Caco-2 (cell line): ENCODE measurements at regions of chr1 and their contacts with region 1.

Region 1: DNA sequence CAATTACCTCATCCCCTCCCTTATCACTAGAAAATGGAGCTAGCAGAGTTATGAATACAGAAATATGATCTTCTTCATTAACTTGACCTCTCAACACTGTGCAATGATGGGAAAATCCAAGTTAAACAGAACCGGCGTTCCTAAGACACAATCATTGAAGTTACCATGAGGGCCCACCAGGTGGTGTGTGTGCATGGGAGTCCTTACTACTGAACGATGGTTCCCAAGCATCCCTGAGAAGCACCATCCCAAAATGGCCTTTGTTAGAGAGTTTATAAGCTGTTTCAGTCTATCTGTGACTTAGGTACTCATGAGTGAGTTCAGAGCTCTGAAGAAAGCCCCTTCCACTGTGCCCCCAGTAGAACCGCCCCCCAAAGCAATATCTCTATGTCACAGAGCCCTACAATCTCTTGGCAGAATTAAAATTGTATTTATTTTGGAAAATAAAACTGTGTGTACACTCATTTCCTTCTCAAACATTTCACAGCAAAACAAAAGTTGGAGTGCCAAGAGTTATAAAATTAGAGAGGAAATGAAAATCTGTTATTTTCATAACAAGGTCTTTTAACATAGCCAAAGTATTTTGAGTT is 56.8 kb downstream of the PLD5 start:
- DNase-seq: peak; percentile 51 to 54
- H3K4me3 ChIP-seq: no peak overlapping the region
- H3K4me3 Mint-ChIP-seq: no peak overlapping the region
- H3K27ac Mint-ChIP-seq: no peak overlapping the region
- H3K4me1 ChIP-seq: peaks cover 9% of the 10 kb centered on the region
- H3K4me1 Mint-ChIP-seq: peaks cover 6% of the 10 kb centered on the region
- H3K27me3 ChIP-seq: no peaks in the 10 kb centered on the region
- H3K27me3 Mint-ChIP-seq: no peaks in the 10 kb centered on the region
- CTCF ChIP-seq: peak; percentile 57 to 77

Region 2: GRCh38 chr1:242641461-242641860 is 173.8 kb after region 1 on chr1:
- CTCF ChIA-PET with region 1: interaction called, 3 read pairs
- POLR2A ChIA-PET with region 1: no interaction called
- intact Hi-C with region 1: loop called (anchors 10 kb)
- DNase-seq: no peak
- H3K4me3 ChIP-seq: no peak overlapping the region
- H3K4me3 Mint-ChIP-seq: no peak overlapping the region
- H3K27ac Mint-ChIP-seq: no peak overlapping the region
- H3K4me1 ChIP-seq: no peaks in the 10 kb centered on the region
- H3K4me1 Mint-ChIP-seq: no peaks in the 10 kb centered on the region
- H3K27me3 ChIP-seq: no peaks in the 10 kb centered on the region
- H3K27me3 Mint-ChIP-seq: no peaks in the 10 kb centered on the region
- CTCF ChIP-seq: no peak

Region 3: DNA sequence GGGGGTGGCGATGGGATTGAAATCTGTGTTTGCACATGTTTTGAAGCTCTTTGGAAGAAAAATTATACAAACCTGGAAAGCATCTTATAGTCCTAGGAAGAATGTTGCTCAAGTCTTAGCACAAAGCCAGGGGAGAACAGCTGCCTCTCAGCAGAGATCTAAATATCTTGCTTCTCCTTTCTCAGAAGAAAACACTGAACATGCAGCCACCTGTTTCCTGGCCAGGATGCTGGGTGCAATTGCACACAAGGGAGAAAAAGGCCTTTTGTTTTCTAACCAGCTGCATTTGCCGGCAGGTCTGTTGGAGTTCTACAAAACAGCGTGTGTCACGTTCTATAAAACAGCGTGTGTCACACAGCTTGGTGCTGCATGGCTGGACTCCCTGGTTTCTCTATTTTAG is 316.4 kb after region 1 on chr1:
- CTCF ChIA-PET with region 1: no interaction called
- POLR2A ChIA-PET with region 1: no interaction called
- intact Hi-C with region 1: loop called (anchors 10 kb)
- DNase-seq: no peak
- H3K4me3 ChIP-seq: no peak overlapping the region
- H3K4me3 Mint-ChIP-seq: no peak overlapping the region
- H3K27ac Mint-ChIP-seq: no peak overlapping the region
- H3K4me1 ChIP-seq: peaks cover 4% of the 10 kb centered on the region; the same call in 1 of the 2 replicates
- H3K4me1 Mint-ChIP-seq: no peaks in the 10 kb centered on the region
- H3K27me3 ChIP-seq: no peaks in the 10 kb centered on the region
- H3K27me3 Mint-ChIP-seq: no peaks in the 10 kb centered on the region
- CTCF ChIP-seq: no peak

Region 4: DNA sequence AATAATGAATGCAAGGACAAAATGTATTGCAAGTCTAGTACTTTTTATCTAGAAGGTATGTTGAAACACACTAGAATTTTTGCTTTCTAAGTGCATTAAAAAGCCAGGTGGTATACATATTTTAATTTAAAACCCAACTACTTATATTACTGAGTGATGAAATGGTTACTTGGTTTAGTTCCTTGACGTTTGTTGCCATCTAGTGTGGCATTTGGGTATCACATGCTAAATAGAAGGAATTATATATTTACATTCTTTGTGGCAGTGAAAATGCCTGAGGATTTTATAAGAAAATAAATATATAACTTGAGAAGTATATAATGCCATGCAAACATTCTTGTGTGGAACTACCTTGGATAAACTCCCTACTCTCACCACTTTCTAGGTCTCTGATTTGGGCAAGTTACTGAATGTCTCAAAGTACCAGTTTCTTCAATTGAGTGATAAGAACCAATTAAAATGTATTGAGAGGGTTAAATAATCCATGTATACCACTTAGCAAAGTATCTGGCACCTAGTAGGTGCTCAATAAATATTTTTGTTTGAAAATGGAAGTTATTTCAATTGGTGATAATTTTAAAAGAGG is 857.7 kb after region 1 on chr1:
- CTCF ChIA-PET with region 1: no interaction called
- POLR2A ChIA-PET with region 1: no interaction called
- intact Hi-C with region 1: loop called (anchors 1 kb)
- DNase-seq: peak in 1 of 2 experiments; percentile 56
- H3K4me3 ChIP-seq: no peak overlapping the region
- H3K4me3 Mint-ChIP-seq: no peak overlapping the region
- H3K27ac Mint-ChIP-seq: no peak overlapping the region
- H3K4me1 ChIP-seq: no peaks in the 10 kb centered on the region
- H3K4me1 Mint-ChIP-seq: no peaks in the 10 kb centered on the region
- H3K27me3 ChIP-seq: no peaks in the 10 kb centered on the region
- H3K27me3 Mint-ChIP-seq: no peaks in the 10 kb centered on the region
- CTCF ChIP-seq: peak; percentile 57 to 67